ENCODE measurements at regions of chr2 and their contacts with region 1.

Region 1: GRCh38 chr2:165203689-165204559 is at the start of gene SCN3A:
- DNase-seq: peak; percentile 25
- H3K4me3 ChIP-seq: peak within 1 kb of the TSS; percentile 22 to 40; a peak in 3 of 4 replicates
- H3K27ac ChIP-seq: peak within 1 kb of the TSS in 1 of 2 experiments; percentile 72; a peak in 2 of 4 replicates
- H3K4me1 ChIP-seq: no peaks in the 10 kb centered on the region; a peak in 2 of 4 replicates
- H3K27me3 ChIP-seq: no peaks in the 10 kb centered on the region
- CTCF ChIP-seq: peak; percentile 87
- EP300 ChIP-seq: no peak
- RAD21 ChIP-seq: peak; percentile 93
- polyA plus RNA-seq, gene SCN3A: 0.33 and 0.97 TPM in 2 replicates

Region 2: DNA sequence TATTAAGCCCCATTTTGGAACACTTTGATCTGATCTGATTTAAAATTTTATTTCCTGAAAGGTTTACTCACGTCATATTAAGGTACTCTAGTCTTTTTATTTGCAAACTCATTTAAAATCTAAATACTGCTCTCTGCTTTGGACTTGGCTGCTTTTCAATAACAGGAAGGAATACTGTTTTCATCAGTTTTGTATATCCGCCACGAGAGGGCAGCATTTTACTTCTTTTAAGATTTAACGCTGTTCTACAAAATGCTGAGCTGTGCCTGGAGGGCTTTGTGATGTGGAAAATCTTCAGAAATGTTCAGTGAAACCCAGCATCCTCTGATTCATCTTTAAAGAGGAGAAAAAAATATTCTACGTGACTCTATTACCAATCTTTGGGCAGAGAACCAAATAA is 211.1 kb before region 1 on chr2:
- CTCF ChIA-PET with region 1: interaction called, 32 read pairs
- POLR2A ChIA-PET with region 1: no interaction called
- DNase-seq: peak; percentile 45
- H3K4me3 ChIP-seq: no peak overlapping the region
- H3K27ac ChIP-seq: peak overlapping the region in 1 of 2 experiments; percentile 5; a peak in 1 of 4 replicates
- H3K4me1 ChIP-seq: peaks cover 0 to 18% of the 10 kb centered on the region in 2 experiments; a peak in 2 of 4 replicates
- H3K27me3 ChIP-seq: no peaks in the 10 kb centered on the region
- CTCF ChIP-seq: peak; percentile 51
- EP300 ChIP-seq: no peak
- RAD21 ChIP-seq: peak; percentile 81

Region 3: GRCh38 chr2:165141601-165142354 is 62.1 kb before region 1 on chr2:
- CTCF ChIA-PET with region 1: interaction called, 14 read pairs
- POLR2A ChIA-PET with region 1: no interaction called
- DNase-seq: no peak
- H3K4me3 ChIP-seq: no peak overlapping the region
- H3K27ac ChIP-seq: no peak overlapping the region; a peak in 1 of 4 replicates
- H3K4me1 ChIP-seq: no peaks in the 10 kb centered on the region
- H3K27me3 ChIP-seq: no peaks in the 10 kb centered on the region
- CTCF ChIP-seq: peak; percentile 53
- EP300 ChIP-seq: no peak
- RAD21 ChIP-seq: peak; percentile 49

Region 4: GRCh38 chr2:165191096-165191728 is 12.7 kb before region 1 on chr2:
- CTCF ChIA-PET with region 1: interaction called, 20 read pairs
- POLR2A ChIA-PET with region 1: no interaction called
- DNase-seq: no peak
- H3K4me3 ChIP-seq: no peak overlapping the region
- H3K27ac ChIP-seq: no peak overlapping the region
- H3K4me1 ChIP-seq: peaks cover 0 to 2% of the 10 kb centered on the region in 2 experiments; a peak in 2 of 4 replicates
- H3K27me3 ChIP-seq: no peaks in the 10 kb centered on the region
- CTCF ChIP-seq: no peak
- EP300 ChIP-seq: no peak
- RAD21 ChIP-seq: no peak

Region 5: DNA sequence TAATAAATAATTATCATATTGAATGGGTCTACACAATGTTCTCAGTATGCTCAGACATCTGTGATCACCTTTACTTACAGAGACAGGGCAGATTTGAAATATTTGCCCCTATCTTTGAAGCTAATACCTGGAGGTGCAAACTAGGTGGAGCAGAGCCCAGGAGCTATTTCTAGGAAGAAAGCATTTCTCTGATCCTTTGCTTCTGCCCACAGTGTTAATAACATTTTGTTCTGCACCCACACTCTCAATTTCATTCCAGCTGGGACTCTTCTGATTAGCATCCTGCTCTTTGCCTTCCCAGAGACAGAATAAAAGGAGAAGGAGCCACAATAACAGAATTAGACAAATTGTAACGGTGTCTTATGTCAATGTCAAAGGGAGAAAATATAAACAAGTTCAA is 23.6 kb after region 1 on chr2:
- CTCF ChIA-PET with region 1: interaction called, 20 read pairs
- POLR2A ChIA-PET with region 1: no interaction called
- DNase-seq: no peak
- H3K4me3 ChIP-seq: no peak overlapping the region
- H3K27ac ChIP-seq: no peak overlapping the region
- H3K4me1 ChIP-seq: no peaks in the 10 kb centered on the region
- H3K27me3 ChIP-seq: no peaks in the 10 kb centered on the region
- CTCF ChIP-seq: no peak
- EP300 ChIP-seq: no peak
- RAD21 ChIP-seq: no peak

Region 6: DNA sequence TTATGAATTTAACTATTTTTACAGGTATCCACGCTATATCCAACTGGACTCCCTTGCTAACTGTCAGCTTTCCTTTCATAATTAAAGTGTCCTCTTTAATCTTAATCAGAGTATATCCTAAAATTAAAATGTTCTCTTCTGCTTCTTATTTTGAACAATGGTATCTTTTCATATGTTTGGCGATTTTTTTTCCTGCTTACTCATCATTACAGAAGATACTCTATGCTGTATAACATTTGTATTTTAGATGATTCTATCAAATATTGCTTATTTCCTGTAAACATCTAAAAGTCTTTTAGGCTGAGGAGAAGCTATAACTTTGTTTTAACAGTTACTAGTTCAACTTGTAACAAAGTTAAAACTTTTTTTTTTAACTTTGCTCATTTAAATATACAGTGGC is 52.7 kb after region 1 on chr2:
- CTCF ChIA-PET with region 1: no interaction called
- POLR2A ChIA-PET with region 1: no interaction called
- DNase-seq: no peak
- H3K4me3 ChIP-seq: no peak overlapping the region
- H3K27ac ChIP-seq: no peak overlapping the region
- H3K4me1 ChIP-seq: no peaks in the 10 kb centered on the region; a peak in 1 of 4 replicates
- H3K27me3 ChIP-seq: no peaks in the 10 kb centered on the region
- CTCF ChIP-seq: no peak
- EP300 ChIP-seq: no peak
- RAD21 ChIP-seq: no peak

Region 7: DNA sequence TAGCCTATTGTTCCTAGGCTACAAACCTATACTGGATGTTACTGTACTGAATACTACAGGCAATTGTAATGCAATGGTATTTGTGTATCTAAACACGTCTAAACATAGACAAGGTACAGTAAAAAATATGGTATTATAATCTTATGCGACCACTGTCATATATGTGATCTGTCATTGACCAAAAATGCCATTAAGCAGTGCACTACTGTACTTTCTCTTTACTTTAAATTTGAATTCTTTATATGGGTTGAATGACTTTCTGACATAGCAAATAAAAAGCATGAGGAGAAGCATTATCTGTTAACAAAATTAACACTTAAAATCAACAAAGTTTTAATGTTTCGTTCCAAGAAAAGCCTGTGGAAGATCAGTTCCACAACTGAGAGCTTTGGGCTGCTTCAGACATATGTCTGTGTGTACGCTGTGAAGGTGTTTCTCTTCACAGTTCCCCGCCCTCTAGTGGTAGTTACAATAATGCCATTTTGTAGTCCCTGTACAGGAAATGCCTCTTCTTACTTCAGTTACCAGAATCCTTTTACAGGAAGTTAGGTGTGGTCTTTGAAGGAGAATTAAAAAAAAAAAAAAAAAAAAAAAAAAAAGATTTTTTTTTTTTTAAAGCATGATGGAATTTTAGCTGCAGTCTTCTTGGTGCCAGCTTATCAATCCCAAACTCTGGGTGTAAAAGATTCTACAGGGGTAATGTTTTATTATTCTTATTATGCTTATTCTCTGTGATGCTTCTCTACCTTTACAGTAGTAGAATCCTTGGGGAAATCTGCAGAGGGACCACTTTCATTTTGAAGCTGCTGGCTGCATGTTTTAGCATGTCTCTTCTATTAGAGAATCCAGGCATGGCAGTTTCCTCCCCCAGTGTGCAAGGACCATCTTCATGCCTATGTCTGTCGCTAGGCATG is 89.8 kb after region 1 on chr2:
- CTCF ChIA-PET with region 1: interaction called, 16 read pairs
- POLR2A ChIA-PET with region 1: no interaction called
- DNase-seq: peak; percentile 67
- H3K4me3 ChIP-seq: peak overlapping the region; percentile 86 to 90
- H3K27ac ChIP-seq: peak overlapping the region in 1 of 2 experiments; percentile 90; a peak in 2 of 4 replicates
- H3K4me1 ChIP-seq: peaks cover 0 to 11% of the 10 kb centered on the region in 2 experiments; a peak in 2 of 4 replicates
- H3K27me3 ChIP-seq: no peaks in the 10 kb centered on the region
- CTCF ChIP-seq: peak; percentile 76
- EP300 ChIP-seq: no peak
- RAD21 ChIP-seq: peak; percentile 70